Left lung (tissue), 14 donors: ENCODE measurements at regions of chr10 and their contacts with region 1.

Region 1: GRCh38 chr10:118241229-118242137 is 100.6 kb downstream of the FAM204A start:
- DNase-seq: peak in 3 of 4 donors; percentile 65 to 87 (median 76)
- ATAC-seq: peak; percentile 93
- H3K4me3 ChIP-seq: no peak overlapping the region
- H3K27ac ChIP-seq: no peak overlapping the region
- H3K4me1 ChIP-seq: no peaks in the 10 kb centered on the region
- H3K27me3 ChIP-seq: peaks cover 26 to 94% of the 10 kb centered on the region in 2 donors
- CTCF ChIP-seq: peak; percentile 91 to 92

Region 2: GRCh38 chr10:117496616-117497028 is 744.9 kb before region 1 on chr10:
- intact Hi-C with region 1: loop called in 1 of 2 experiments (anchors 5 kb)
- DNase-seq: peak; percentile 73 to 92 (median 79)
- ATAC-seq: peak; percentile 99
- H3K4me3 ChIP-seq: no peak overlapping the region
- H3K27ac ChIP-seq: no peak overlapping the region
- H3K4me1 ChIP-seq: no peaks in the 10 kb centered on the region
- H3K27me3 ChIP-seq: peaks cover 10 to 60% of the 10 kb centered on the region in 2 donors
- CTCF ChIP-seq: peak; percentile 91 to 92

Region 3: DNA sequence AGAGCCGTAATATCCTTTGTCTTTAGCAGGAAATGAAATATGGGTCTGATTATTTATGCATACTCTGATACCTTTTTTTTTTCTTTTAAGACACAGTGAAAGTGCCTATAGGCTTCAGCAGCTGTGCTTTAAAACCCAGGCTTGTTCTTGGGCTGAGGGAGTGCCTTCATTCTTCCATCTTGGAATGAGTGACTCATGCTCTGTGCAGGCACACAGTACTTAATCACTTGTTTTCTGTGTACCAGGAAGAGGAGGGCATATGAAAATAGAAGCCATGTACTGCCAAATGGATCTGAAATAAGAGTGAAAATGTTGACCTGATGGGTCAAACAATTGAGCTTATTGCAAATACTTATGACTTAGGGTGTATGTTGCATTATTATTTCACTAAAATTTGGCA is 1496.3 kb after region 1 on chr10:
- intact Hi-C with region 1: no loop called
- DNase-seq: no peak
- ATAC-seq: peak; percentile 98
- H3K4me3 ChIP-seq: no peak overlapping the region
- H3K27ac ChIP-seq: peak overlapping the region; percentile 42 to 59
- H3K4me1 ChIP-seq: peaks cover 12 to 14% of the 10 kb centered on the region in 2 donors
- H3K27me3 ChIP-seq: no peaks in the 10 kb centered on the region
- CTCF ChIP-seq: no peak